ENCODE measurements at regions of chr2 and their contacts with region 1.

Region 1: DNA sequence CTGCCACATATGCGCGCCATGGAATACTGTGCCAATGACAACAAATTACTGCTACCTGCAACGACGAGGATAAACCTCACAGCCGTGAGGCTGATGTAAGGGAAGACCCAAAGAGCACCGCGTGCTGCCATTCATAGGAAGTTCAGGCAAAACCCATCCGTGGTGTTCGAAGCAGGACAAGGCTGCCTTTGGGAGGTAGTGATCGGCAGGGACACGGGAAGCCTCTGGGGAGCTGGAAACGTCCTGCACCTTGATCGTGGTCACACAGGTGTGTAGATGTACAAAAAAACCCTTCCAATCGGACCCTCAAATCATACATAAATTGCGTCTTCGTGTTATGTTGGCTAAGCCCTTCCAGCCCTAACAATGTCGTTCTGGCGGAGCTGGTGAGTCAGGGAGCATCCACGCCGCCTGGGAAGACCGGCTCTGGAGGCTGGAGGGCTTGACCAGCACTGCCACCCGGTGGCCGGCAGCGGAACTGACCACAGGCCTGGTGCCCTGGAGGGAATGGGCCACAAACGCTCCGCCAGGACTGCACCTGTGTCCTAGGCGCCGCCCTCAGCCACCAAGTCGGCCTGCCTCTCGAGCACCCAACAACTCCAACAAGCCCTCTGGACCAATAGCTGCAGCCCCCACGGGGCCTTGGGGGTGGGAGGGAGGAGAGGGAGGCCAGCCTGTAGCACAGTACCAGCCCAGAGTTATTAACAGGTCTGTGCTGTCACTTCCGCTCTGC is 4.1 kb upstream of the NEURL3 start:
- DNase-seq: peak; percentile 94
- H3K4me3 ChIP-seq: no peak overlapping the region
- H3K27ac ChIP-seq: no peak overlapping the region
- H3K4me1 ChIP-seq: peaks cover 17% of the 10 kb centered on the region
- H3K27me3 ChIP-seq: no peaks in the 10 kb centered on the region
- CTCF ChIP-seq: peak; percentile 99

Region 2: DNA sequence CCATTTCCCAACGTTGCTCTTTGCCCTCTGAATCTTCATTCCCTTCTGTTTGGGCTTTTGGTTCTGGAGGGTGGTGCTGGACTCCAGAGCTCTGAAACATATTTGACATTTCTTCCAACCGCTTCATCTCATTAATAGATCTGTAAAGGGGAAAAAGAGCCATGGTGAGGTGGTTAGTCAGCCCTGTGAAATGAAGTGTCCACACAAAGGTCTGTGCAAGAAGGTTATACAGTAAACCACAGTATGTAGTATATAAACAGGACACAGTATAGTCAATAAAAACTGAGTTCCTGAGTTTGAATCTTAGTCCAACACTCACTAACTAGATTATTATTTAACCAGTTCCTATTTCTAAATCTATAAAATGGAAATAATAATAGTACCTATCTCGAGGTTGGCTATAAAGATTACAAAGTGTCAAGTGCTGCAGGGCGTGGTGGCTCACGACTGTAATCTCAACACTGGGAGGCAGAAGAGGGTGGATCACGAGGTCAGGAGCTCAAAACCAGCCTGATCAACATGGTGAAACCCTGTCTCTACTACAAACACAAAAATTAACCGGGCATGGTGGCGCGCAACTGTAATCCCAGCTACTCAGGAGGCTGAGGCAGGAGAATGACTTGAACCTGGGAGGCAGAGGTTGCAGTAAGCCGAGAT is 313.7 kb before region 1 on chr2:
- intact Hi-C with region 1: no loop called
- DNase-seq: peak; percentile 45
- H3K4me3 ChIP-seq: no peak overlapping the region
- H3K27ac ChIP-seq: no peak overlapping the region
- H3K4me1 ChIP-seq: no peaks in the 10 kb centered on the region
- H3K27me3 ChIP-seq: no peaks in the 10 kb centered on the region
- CTCF ChIP-seq: no peak

Region 3: GRCh38 chr2:96408616-96409542 is 100.4 kb before region 1 on chr2:
- intact Hi-C with region 1: loop called (anchors 2 kb)
- DNase-seq: no peak
- H3K4me3 ChIP-seq: no peak overlapping the region
- H3K27ac ChIP-seq: no peak overlapping the region
- H3K4me1 ChIP-seq: no peaks in the 10 kb centered on the region
- H3K27me3 ChIP-seq: no peaks in the 10 kb centered on the region
- CTCF ChIP-seq: no peak

Region 4: DNA sequence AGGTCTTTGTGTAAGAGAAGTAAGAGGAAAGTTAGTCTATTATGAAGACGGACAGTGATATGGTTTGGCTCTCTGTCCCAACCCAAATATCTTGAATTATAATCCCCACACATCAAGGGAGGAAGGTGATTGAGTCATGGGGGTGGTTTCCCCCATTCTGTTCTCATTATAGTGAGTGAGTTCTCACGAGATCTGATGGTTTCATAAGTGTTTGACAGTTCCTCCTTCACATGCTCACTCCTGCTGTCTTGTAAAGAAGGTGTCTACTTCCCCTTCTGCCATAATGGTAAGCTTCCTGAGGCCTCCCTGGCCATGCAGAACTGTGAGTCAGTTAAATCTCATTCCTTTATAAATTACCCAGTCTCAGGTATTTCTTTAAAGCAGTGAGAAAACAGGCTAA is 71.8 kb before region 1 on chr2:
- intact Hi-C with region 1: no loop called
- DNase-seq: no peak
- H3K4me3 ChIP-seq: no peak overlapping the region
- H3K27ac ChIP-seq: no peak overlapping the region
- H3K4me1 ChIP-seq: no peaks in the 10 kb centered on the region
- H3K27me3 ChIP-seq: no peaks in the 10 kb centered on the region
- CTCF ChIP-seq: no peak

Region 5: DNA sequence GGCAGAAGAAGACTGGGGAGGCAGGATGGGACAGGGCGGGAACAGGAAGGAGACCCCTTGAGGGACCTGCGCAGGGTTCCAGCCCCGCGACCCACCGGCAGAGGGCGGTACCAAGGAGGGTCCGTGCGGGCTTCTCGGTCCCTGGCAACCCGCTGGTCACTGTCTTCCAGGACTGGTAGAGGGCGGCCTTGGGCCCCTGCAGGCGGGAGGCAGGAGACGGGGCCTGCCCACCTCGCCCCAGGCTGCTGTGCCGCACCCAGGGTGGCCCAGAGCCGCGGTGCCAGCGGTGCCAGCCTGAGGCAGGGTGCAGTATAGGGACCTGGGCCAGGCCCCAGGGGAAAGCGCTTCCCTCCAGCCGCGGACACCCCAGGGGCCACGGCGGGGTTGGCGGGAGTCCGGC is 38.6 kb before region 1 on chr2:
- intact Hi-C with region 1: loop called (anchors 5 kb)
- DNase-seq: peak; percentile 67
- H3K4me3 ChIP-seq: peak overlapping the region; percentile 19
- H3K27ac ChIP-seq: no peak overlapping the region
- H3K4me1 ChIP-seq: no peaks in the 10 kb centered on the region
- H3K27me3 ChIP-seq: no peaks in the 10 kb centered on the region
- CTCF ChIP-seq: peak; percentile 67

Region 6: DNA sequence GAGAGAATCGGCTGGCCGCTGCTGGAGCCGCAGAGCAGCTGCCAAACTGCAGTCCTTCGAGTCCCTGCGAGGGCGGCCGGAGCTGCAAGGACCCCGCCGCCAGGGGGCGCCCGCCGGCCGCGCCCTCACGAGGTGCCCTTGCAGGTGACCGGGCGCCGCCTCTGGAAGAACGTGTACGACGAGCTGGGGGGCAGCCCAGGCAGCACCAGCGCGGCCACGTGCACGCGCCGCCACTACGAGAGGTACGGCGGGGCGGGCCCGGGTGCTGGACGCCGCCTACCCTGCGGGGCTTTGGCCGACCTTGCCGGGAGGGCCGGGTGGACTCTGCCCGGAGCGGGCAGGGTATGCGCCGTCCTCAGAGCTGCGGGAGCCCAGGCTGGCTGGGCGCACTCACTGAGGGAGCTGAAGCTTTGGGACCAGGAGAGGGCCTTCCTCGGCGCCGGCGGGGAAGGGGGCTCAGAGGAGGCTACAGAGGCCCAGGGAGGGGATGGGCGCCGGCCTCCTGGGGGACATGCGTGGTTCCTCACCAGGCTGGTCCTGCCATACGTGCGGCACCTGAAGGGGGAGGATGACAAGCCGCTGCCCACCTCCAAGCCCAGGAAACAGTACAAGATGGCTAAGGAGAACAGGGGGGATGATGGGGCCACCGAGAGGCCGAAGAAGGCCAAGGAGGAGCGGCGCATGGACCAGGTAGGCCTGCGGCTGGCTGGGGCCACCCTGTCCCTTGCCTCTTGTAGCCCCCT is 40.9 kb after region 1 on chr2:
- intact Hi-C with region 1: no loop called
- DNase-seq: peak; percentile 74
- H3K4me3 ChIP-seq: no peak overlapping the region
- H3K27ac ChIP-seq: no peak overlapping the region
- H3K4me1 ChIP-seq: no peaks in the 10 kb centered on the region
- H3K27me3 ChIP-seq: no peaks in the 10 kb centered on the region
- CTCF ChIP-seq: peak; percentile 65

Measured in colonic mucosa (tissue), 4 donors.